Activated CD4-positive, alpha-beta T cell treated with anti-CD3 and anti-CD28 coated beads for 36 hours (primary cell): ENCODE measurements at regions of chr14 and their contacts with region 1.

Region 1: DNA sequence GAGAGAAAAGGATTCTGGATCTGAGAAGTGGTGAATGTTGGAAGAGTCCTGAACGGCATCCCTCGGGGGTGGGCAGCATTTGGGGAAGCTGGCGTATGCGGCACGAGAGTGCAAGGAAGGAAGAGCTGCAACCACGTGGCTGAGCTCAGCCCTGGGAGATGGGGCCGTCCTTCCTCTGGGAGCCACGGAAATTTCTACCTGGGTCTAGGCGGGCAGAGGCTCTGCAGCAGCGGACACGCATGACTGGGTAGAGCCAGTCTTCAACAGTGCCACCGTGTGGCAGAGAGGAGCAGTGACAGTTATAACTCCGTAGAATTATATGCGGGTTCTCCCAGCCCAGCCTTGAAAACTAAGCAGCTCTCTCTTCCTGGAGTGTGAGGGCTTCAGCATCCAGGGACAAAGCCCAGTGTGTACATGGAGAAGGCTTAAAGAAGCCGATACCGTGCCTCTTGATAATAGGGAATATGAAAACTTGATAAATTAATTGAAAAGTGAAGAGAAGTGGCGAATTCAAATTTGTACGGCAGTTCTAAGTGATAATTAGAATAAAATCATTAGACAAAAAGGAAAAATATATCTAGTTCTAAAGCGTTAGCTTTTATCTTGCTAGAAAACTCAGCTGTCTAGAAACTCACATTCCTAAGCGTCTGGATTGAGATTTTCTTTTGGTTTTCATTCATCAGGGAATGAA is 82.9 kb upstream of the STXBP6 start:
- DNase-seq: peak; percentile 67
- ATAC-seq: peak; percentile 91
- H3K4me3 Mint-ChIP-seq: no peak overlapping the region
- H3K27ac Mint-ChIP-seq: no peak overlapping the region
- H3K4me1 Mint-ChIP-seq: peaks cover 3% of the 10 kb centered on the region
- H3K27me3 Mint-ChIP-seq: peaks cover 33% of the 10 kb centered on the region

Region 2: GRCh38 chr14:24734878-24735500 is 397.9 kb before region 1 on chr14:
- CTCF ChIA-PET with region 1: interaction called, 3 read pairs
- POLR2A ChIA-PET with region 1: no interaction called
- intact Hi-C with region 1: loop called (anchors 1 to 2 kb)
- DNase-seq: peak; percentile 47
- ATAC-seq: peak; percentile 57
- H3K4me3 Mint-ChIP-seq: no peak overlapping the region
- H3K27ac Mint-ChIP-seq: no peak overlapping the region
- H3K4me1 Mint-ChIP-seq: no peaks in the 10 kb centered on the region
- H3K27me3 Mint-ChIP-seq: peaks cover 9% of the 10 kb centered on the region

Region 3: GRCh38 chr14:24806061-24806678 is 326.7 kb before region 1 on chr14:
- CTCF ChIA-PET with region 1: interaction called, 23 read pairs
- POLR2A ChIA-PET with region 1: no interaction called
- intact Hi-C with region 1: loop called (anchors 1 to 5 kb)
- DNase-seq: peak; percentile 74
- ATAC-seq: no peak
- H3K4me3 Mint-ChIP-seq: no peak overlapping the region
- H3K27ac Mint-ChIP-seq: no peak overlapping the region
- H3K4me1 Mint-ChIP-seq: no peaks in the 10 kb centered on the region
- H3K27me3 Mint-ChIP-seq: peaks cover 14% of the 10 kb centered on the region